Heart left ventricle (tissue), 16 donors: ENCODE measurements at regions of chr3 and their contacts with region 1.

Region 1: GRCh38 chr3:129507181-129507831 is 21.1 kb upstream of the RHO start:
- DNase-seq: peak; percentile 50 to 72 (median 62)
- ATAC-seq: peak; percentile 76 to 82 (median 78)
- H3K4me3 ChIP-seq: no peak overlapping the region
- H3K27ac ChIP-seq: peak overlapping the region in 6 of 12 donors; percentile 11 to 34 (median 15)
- H3K4me1 ChIP-seq: peaks cover 0 to 69% (median 31%) of the 10 kb centered on the region in 12 donors
- H3K27me3 ChIP-seq: no peaks in the 10 kb centered on the region
- CTCF ChIP-seq: no peak
- POLR2A ChIP-seq: no peak

Region 2: GRCh38 chr3:129461461-129462146 is 45.7 kb before region 1 on chr3:
- intact Hi-C with region 1: loop called in 1 of 10 experiments (anchors 2 kb)
- DNase-seq: peak in 4 of 5 donors; percentile 15 to 87 (median 50)
- ATAC-seq: peak; percentile 92 to 94 (median 94)
- H3K4me3 ChIP-seq: no peak overlapping the region
- H3K27ac ChIP-seq: peak overlapping the region; percentile 6 to 94 (median 74)
- H3K4me1 ChIP-seq: peaks cover 0 to 18% (median 5%) of the 10 kb centered on the region in 12 donors
- H3K27me3 ChIP-seq: no peaks in the 10 kb centered on the region
- CTCF ChIP-seq: no peak
- POLR2A ChIP-seq: peak in 1 of 2 donors; percentile 8

Region 3: GRCh38 chr3:129521611-129522010 is 14.3 kb after region 1 on chr3:
- intact Hi-C with region 1: no loop called
- DNase-seq: peak in 1 of 5 donors; percentile 33
- ATAC-seq: no peak
- H3K4me3 ChIP-seq: no peak overlapping the region
- H3K27ac ChIP-seq: no peak overlapping the region
- H3K4me1 ChIP-seq: peaks cover 0 to 17% (median 0%) of the 10 kb centered on the region in 12 donors
- H3K27me3 ChIP-seq: no peaks in the 10 kb centered on the region
- CTCF ChIP-seq: no peak
- POLR2A ChIP-seq: no peak

Region 4: DNA sequence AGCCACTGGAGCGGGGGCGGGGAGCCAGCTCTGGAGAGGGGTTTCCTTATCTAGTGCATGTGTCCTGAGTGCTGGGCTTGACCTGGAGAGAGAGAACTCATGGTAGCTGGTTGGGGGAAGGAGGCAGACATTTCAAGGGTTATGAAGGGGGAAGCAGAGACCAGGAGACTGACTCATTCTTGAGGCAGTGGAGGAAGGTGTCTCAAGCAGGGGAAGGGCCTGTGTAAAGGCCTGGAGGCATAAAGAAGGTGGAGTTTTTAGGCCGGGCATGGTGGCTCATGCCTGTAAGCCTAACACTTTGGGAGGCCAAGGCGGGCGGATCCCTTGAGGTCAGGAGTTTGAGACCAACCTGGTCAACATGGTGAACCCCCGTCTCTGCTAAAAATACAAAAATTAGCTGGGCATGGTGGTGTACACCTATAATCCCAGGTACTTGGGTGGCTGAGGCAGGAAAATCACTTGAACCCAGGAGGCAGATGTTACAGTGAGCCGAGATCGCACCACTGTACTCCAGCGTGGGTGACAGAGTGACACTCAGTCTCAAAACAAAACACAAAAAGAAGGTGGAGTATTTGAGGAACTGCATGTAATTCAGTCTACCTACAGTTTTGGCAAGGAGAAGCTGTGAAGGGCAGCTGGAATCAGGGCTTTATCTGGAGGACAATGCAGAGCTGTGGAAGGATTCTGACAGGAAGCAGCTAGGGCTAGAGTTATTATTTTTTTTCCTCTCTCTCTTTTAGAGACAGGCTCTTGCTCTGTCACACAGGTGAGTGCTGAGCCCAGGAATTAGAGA is 42.3 kb after region 1 on chr3:
- intact Hi-C with region 1: loop called in 6 of 10 experiments (anchors 5 to 10 kb)
- DNase-seq: peak in 1 of 5 donors; percentile 28
- ATAC-seq: no peak
- H3K4me3 ChIP-seq: no peak overlapping the region
- H3K27ac ChIP-seq: no peak overlapping the region
- H3K4me1 ChIP-seq: peaks cover 3 to 26% (median 18%) of the 10 kb centered on the region in 12 donors
- H3K27me3 ChIP-seq: no peaks in the 10 kb centered on the region
- CTCF ChIP-seq: no peak
- POLR2A ChIP-seq: no peak

Region 5: GRCh38 chr3:129560901-129561594 is 53.7 kb after region 1 on chr3:
- intact Hi-C with region 1: loop called in 3 of 10 experiments (anchors 5 to 10 kb)
- DNase-seq: peak; percentile 86 to 94 (median 89)
- ATAC-seq: peak; percentile 73 to 88 (median 81)
- H3K4me3 ChIP-seq: peak overlapping the region in 2 of 12 donors; percentile 1 to 8
- H3K27ac ChIP-seq: peak overlapping the region; percentile 74 to 90 (median 80)
- H3K4me1 ChIP-seq: peaks cover 19 to 97% (median 71%) of the 10 kb centered on the region in 12 donors
- H3K27me3 ChIP-seq: no peaks in the 10 kb centered on the region
- CTCF ChIP-seq: no peak
- POLR2A ChIP-seq: no peak

Region 6: GRCh38 chr3:129690406-129690805 is 183.1 kb after region 1 on chr3:
- intact Hi-C with region 1: no loop called
- DNase-seq: peak in 1 of 5 donors; percentile 24
- ATAC-seq: peak; percentile 34 to 63 (median 49)
- H3K4me3 ChIP-seq: no peak overlapping the region
- H3K27ac ChIP-seq: peak overlapping the region in 1 of 12 donors; percentile 14
- H3K4me1 ChIP-seq: peaks cover 0 to 44% (median 15%) of the 10 kb centered on the region in 12 donors
- H3K27me3 ChIP-seq: no peaks in the 10 kb centered on the region
- CTCF ChIP-seq: no peak
- POLR2A ChIP-seq: no peak